Activated B cell treated with CpG ODN at 0.5 μM for 24 hours (primary cell): ENCODE measurements at regions of chr1 and their contacts with region 1.

Region 1: GRCh38 chr1:145996433-145997015 is at the start of gene TXNIP:
- DNase-seq: peak; percentile 82
- ATAC-seq: peak; percentile 85
- H3K4me3 Mint-ChIP-seq: peak within 1 kb of the TSS; percentile 88
- H3K27ac Mint-ChIP-seq: peak within 1 kb of the TSS; percentile 97
- H3K4me1 Mint-ChIP-seq: peaks cover 74% of the 10 kb centered on the region
- H3K27me3 Mint-ChIP-seq: no peaks in the 10 kb centered on the region
- CTCF ChIP-seq: no peak
- total RNA-seq, gene TXNIP: 300 and 306 TPM in 2 replicates

Region 2: DNA sequence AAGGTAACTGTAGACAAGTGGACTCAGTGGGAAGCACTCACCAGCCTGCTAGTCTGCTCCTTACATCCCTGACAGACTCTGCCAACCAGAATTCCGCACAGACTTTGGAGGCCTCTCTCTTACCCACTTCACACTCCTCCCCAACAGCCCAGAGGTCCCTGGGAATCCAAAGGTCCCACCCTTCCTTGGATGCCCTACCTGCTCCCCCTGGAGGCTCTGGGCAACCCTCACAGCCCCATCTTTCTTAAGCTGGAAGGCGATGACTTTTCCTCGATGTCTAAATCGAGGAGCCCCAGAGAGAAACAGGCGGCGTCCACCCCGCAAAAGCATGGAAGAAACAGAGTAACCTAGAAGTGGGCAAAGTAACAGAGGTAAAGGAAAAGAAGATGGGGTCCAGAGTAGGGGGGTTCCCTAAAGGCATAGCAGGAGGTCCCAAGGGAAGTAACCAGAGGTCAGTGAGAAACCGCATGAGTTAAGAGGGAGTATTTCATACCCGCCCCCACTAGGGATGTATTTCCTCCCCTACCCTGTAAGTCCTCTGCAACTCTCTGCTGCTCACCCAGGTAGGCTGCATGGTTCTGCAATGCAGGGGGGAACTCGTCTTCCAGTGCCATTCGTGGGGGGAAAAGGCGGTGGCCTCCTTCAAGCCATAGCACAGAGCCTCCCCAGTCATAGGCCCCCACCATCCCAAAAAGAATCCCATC is 95.1 kb before region 1 on chr1:
- CTCF ChIA-PET with region 1: no interaction called
- POLR2A ChIA-PET with region 1: no interaction called
- intact Hi-C with region 1: no loop called
- DNase-seq: no peak
- ATAC-seq: no peak
- H3K4me3 Mint-ChIP-seq: no peak overlapping the region
- H3K27ac Mint-ChIP-seq: no peak overlapping the region
- H3K4me1 Mint-ChIP-seq: no peaks in the 10 kb centered on the region
- H3K27me3 Mint-ChIP-seq: no peaks in the 10 kb centered on the region
- CTCF ChIP-seq: no peak

Region 3: GRCh38 chr1:145918144-145918992 is 78.2 kb before region 1 on chr1 and contains the start of gene PEX11B:
- CTCF ChIA-PET with region 1: no interaction called
- POLR2A ChIA-PET with region 1: interaction called, 13 read pairs
- intact Hi-C with region 1: no loop called
- DNase-seq: peak; percentile 88
- ATAC-seq: peak; percentile 90
- H3K4me3 Mint-ChIP-seq: peak within 1 kb of the TSS; percentile 95
- H3K27ac Mint-ChIP-seq: peak within 1 kb of the TSS; percentile 93
- H3K4me1 Mint-ChIP-seq: peaks cover 35% of the 10 kb centered on the region
- H3K27me3 Mint-ChIP-seq: no peaks in the 10 kb centered on the region
- CTCF ChIP-seq: no peak
- total RNA-seq, gene PEX11B: 42.7 and 47.7 TPM in 2 replicates

Region 4: DNA sequence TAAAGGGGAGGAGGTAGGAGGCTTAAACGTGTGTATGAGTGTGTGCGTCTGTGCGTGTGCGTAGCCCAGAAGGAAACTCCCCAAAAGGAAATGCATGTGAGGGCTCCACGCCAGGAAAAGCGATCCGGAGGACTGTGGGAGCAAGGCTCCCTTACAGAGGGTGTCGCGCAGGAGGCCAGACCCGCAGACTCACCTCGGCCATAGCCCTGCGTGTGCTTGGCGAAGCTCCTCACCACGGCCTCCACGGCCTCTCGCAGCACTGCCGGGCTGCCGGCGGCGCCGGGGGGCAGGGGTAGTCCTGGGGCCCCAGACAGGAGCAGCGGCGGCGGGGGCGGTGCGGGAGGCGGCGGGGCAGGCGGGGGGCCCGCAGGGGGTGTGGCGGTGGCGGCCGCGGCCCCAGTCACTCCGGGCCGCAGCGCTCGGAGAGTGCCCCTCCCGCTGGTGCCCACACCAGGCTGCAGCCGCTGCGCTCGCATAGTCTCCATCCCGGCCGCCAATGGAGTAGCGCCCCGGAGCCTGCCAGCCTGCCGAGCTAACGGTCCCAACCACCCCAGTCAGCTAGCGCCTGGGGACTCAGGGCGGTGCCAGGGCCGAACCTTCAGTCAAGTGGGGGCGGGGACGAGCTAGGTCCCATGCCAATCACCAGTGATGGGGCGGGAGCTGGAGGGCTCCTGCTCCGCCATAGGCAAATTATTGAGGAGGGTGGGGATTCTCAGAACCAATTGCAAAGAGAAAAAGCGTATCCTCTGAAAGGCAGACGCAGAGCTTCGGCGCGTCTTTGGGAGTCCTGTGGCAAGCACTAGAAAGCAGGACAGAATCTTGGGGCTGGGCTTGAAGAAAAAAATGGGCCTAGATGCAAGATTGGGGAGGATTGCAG is 38.8 kb before region 1 on chr1 and contains the start of gene LIX1L:
- CTCF ChIA-PET with region 1: interaction called, 4 read pairs
- POLR2A ChIA-PET with region 1: interaction called, 16 read pairs
- intact Hi-C with region 1: loop called (anchors 5 kb)
- DNase-seq: peak; percentile 87
- ATAC-seq: peak; percentile 89
- H3K4me3 Mint-ChIP-seq: peak within 1 kb of the TSS; percentile 96
- H3K27ac Mint-ChIP-seq: peak within 1 kb of the TSS; percentile 94
- H3K4me1 Mint-ChIP-seq: peaks cover 64% of the 10 kb centered on the region
- H3K27me3 Mint-ChIP-seq: no peaks in the 10 kb centered on the region
- CTCF ChIP-seq: no peak
- total RNA-seq, gene LIX1L: 30.1 and 31.7 TPM in 2 replicates

Region 5: DNA sequence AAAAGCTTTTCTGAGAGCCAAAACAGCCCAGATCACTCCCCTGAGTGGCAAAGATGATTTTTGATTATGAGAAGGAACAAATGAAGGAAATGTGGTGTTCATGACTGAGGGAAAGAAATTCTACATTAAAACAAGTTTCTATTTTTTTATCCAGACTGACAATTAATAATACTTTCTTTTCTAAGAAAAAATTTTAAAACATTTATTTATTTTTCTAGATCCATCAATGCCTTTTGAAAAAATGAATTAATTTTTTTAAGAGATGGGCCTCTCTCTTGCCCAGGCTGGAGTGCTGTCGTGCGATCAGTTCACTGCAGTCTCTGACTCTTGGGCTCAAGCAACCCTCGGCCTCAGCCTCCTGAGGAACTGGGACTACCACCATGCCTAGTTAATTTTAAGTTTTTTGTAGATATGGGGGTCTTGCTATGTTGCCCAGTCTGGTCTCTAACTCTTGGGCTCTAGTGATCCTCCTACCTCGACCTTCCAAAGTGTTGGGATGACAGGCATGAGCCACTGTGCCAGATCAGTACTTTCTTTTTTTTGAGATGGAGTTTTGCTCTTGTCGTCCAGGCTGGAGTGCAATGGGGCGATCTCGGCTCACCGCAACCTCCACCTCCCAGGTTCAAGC is 11.1 kb after region 1 on chr1:
- CTCF ChIA-PET with region 1: interaction called, 9 read pairs
- POLR2A ChIA-PET with region 1: interaction called, 53 read pairs
- intact Hi-C with region 1: loop called (anchors 1 kb)
- DNase-seq: no peak
- ATAC-seq: no peak
- H3K4me3 Mint-ChIP-seq: no peak overlapping the region
- H3K27ac Mint-ChIP-seq: peak overlapping the region; percentile 96
- H3K4me1 Mint-ChIP-seq: peaks cover 26% of the 10 kb centered on the region
- H3K27me3 Mint-ChIP-seq: no peaks in the 10 kb centered on the region
- CTCF ChIP-seq: no peak

Region 6: DNA sequence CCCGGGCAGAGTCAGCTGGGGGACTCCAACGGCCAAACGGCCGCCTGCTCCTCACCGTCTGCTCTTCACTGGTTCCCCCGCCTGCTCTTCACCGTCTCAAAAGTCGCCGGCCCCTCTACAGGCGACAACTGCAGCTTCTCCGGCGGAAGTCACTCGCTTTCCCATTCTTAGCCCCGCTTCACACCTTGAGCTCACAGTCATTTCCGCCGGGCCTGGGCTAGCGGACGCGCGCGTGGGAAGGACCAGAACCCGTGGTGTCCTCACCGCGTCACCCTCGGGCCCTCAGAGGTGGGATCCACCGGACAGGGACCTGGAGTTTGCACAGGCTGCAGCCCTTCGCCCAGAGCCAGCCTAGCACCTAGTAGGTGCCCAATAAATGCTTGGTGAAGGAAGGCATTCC is 52.9 kb after region 1 on chr1:
- CTCF ChIA-PET with region 1: no interaction called
- POLR2A ChIA-PET with region 1: interaction called, 17 read pairs
- intact Hi-C with region 1: no loop called
- DNase-seq: no peak
- ATAC-seq: no peak
- H3K4me3 Mint-ChIP-seq: no peak overlapping the region
- H3K27ac Mint-ChIP-seq: no peak overlapping the region
- H3K4me1 Mint-ChIP-seq: peaks cover 22% of the 10 kb centered on the region
- H3K27me3 Mint-ChIP-seq: no peaks in the 10 kb centered on the region
- CTCF ChIP-seq: no peak